A673 (cell line): ENCODE measurements at regions of chr1 and their contacts with region 1.

Region 1: DNA sequence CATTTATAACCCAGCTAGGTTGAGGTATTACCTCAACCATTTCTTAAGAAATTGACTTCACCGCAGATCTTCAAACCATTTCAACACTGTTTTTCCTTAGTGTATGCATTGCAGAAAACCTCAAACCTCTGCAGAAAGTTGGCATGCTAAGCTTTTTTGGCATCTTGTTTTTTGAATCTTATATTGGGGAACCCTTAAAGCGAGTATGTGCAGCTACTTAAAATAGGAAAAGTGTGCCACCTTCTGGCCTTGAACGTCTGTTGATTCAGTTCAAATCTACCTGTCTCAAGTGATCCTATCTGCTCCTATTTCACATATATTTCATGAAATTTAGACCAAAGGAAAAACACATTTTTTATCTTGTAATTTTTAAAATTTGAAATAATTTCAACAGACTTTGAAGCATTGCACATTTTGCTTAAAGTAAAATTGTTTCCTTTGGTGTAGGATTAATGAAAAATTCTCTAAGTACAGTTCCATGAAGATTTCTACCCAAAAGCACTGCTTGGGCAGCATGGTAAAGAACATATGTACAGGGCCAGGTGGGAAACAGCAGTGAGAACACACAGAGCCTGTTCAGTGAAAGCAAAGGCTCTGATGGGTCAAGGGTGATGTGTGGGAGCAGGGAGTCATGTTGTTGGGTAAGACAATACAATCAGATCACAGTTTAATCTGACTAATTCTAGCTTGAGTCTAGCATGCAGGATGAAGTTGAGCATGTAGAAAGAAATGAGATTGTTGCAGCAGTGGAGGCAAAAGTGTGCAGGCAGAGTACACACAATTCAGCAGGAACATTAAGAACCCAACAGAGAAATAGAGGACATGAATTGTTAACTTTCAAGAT is 17.2 kb downstream of the HENMT1 start:
- DNase-seq: peak; percentile 77
- H3K4me3 ChIP-seq: no peak overlapping the region
- H3K27ac ChIP-seq: no peak overlapping the region
- H3K4me1 ChIP-seq: peaks cover 8% of the 10 kb centered on the region
- H3K27me3 ChIP-seq: no peaks in the 10 kb centered on the region
- CTCF ChIP-seq: peak; percentile 75

Region 2: DNA sequence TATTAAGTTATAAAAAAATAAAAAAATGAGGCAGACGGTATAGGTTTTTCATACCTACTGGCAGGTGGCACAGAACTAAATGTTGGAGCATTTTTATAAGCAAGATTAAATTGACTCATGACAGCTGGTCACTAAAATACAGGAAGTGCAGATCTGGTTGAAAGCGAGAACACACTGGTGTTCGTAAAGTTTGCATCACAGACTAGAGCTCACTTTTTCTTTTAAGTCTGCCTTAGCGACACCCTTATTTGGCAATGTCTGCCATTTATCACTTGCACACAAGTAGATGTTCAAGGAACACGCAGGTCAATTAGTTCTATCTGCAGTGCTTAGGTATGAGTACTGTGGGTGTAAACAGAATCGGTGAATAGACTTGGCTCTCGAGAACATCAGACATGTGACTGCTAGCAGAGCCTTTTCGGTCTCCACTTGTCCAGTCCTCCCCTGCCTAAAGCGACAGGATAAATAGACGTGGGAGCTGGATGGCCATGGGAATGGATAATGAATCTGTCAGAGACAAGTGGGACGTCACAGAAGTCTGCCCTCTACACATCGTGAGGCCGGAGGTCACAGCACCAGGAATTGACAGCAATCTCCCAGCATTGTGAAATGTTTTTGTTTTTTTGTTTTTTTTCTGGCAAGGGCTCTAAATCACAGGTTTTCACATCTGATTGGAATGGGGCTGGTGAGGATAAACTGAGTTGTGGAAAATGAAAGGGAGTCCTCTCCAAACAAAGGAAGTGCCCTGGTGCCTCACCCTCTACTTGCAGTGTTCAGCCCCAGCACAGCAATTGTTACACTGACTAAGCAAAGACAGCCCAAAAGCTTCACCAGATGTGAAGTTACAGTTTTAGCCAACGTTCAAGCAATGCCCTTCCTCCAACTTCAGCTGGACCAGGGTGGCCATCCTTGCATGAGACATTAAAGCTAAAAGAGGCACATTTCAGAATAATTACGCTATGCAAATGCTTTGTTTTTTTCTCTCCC is 1254.0 kb before region 1 on chr1:
- CTCF ChIA-PET with region 1: no interaction called
- POLR2A ChIA-PET with region 1: no interaction called
- intact Hi-C with region 1: no loop called
- DNase-seq: no peak
- H3K4me3 ChIP-seq: no peak overlapping the region
- H3K27ac ChIP-seq: no peak overlapping the region
- H3K4me1 ChIP-seq: peaks cover 17% of the 10 kb centered on the region
- H3K27me3 ChIP-seq: no peaks in the 10 kb centered on the region
- CTCF ChIP-seq: no peak

Region 3: DNA sequence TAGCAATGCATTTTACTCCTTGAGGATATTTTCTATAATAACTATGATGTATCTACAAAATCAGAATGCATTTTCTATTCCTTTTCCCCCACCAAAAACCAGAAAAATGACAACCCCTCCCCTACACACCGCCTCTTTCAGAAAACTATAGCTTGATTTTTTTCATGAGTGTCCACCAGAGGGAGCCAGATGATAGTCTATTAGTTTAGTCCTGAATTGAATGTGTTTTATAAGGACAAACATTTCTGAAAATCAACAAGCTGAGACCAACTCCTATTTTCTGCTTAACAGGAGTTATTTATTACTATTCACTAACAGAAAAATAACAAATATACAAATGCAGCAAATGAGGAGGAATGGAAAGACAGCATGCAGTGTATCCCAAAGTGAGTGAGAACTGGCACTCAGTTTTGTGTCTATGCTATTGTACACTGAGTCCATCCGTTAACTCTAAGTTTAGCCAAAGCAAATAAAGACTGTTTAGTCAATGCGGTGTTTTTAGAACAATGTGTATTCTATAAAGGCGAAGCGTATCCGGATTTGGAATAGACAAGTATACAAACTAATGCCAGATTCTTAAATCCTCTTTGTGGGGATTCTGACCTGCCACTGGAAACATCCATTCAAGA is 861.4 kb before region 1 on chr1:
- CTCF ChIA-PET with region 1: no interaction called
- POLR2A ChIA-PET with region 1: no interaction called
- intact Hi-C with region 1: loop called (anchors 10 kb)
- DNase-seq: peak; percentile 73
- H3K4me3 ChIP-seq: no peak overlapping the region
- H3K27ac ChIP-seq: no peak overlapping the region
- H3K4me1 ChIP-seq: no peaks in the 10 kb centered on the region
- H3K27me3 ChIP-seq: no peaks in the 10 kb centered on the region
- CTCF ChIP-seq: peak; percentile 80

Region 4: GRCh38 chr1:108512239-108512981 is 131.3 kb before region 1 on chr1:
- CTCF ChIA-PET with region 1: interaction called, 31 read pairs
- POLR2A ChIA-PET with region 1: no interaction called
- intact Hi-C with region 1: loop called (anchors 1 kb)
- DNase-seq: peak; percentile 55
- H3K4me3 ChIP-seq: no peak overlapping the region
- H3K27ac ChIP-seq: no peak overlapping the region
- H3K4me1 ChIP-seq: no peaks in the 10 kb centered on the region
- H3K27me3 ChIP-seq: no peaks in the 10 kb centered on the region
- CTCF ChIP-seq: peak; percentile 86

Region 5: DNA sequence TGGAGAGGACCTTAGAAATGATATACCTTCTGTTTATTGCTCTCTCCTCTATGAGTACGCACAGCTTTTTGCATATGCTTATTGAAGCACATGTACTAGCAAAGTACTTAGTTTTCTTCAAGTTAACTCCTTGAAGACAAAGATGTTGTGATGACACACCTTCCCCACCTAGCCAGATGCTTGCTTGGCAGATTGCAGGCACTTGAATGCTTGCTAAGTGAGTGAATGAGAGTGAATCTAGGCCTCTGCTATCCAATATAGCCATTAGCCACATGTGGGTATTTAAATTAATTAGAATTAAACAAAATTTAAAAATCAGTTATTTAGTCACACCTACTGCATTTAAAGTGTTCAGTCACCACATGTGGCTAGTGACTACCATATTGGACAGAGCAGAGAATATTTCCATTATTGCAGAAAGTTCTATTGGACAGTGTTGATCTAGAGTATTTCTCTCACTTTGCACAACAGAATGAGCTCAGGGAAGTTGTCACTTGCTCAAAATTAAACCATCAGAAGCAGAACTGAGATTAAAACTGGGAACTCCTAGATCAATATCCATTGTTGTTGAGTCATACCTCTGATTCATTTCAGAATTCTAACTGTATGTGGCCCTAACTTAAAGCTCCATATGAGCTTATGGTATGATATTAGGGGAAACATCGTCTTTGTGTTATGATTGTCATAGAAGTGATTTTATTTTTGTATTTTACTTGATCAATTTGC is 92.4 kb before region 1 on chr1:
- CTCF ChIA-PET with region 1: no interaction called
- POLR2A ChIA-PET with region 1: no interaction called
- intact Hi-C with region 1: no loop called
- DNase-seq: no peak
- H3K4me3 ChIP-seq: no peak overlapping the region
- H3K27ac ChIP-seq: no peak overlapping the region
- H3K4me1 ChIP-seq: no peaks in the 10 kb centered on the region
- H3K27me3 ChIP-seq: no peaks in the 10 kb centered on the region
- CTCF ChIP-seq: no peak

Region 6: DNA sequence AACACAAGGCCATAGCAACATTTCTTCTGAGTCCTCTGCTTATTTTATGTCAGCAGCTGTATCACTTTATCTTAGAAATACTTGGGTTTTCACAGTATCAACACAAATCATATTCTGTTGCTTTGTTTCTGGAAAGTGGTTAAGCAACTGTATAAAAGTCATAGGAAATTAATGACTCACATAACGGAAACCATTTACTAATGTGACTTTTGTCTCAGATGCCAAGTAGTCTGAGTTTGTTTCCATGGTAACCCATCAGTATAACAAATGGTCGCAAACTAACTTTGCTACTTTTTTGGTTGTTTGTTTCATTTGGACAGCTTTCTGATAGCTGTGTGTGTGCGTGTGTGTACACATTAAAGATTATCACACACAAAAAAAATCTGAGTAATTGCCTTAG is 52.8 kb before region 1 on chr1:
- CTCF ChIA-PET with region 1: no interaction called
- POLR2A ChIA-PET with region 1: no interaction called
- intact Hi-C with region 1: loop called (anchors 5 kb)
- DNase-seq: peak; percentile 96
- H3K4me3 ChIP-seq: peak overlapping the region; percentile 17
- H3K27ac ChIP-seq: peak overlapping the region; percentile 79
- H3K4me1 ChIP-seq: peaks cover 59% of the 10 kb centered on the region
- H3K27me3 ChIP-seq: no peaks in the 10 kb centered on the region
- CTCF ChIP-seq: no peak